Dorsolateral prefrontal cortex (tissue), 120 donors: ENCODE measurements at regions of chr15 and their contacts with region 1.

Region 1: GRCh38 chr15:92521624-92522008 is 127.9 kb downstream of the ST8SIA2 start:
- DNase-seq: peak; percentile 31 to 89 (median 76)
- H3K4me3 ChIP-seq: no peak overlapping the region
- H3K27ac ChIP-seq: no peak overlapping the region
- H3K27me3 ChIP-seq: no peaks in the 10 kb centered on the region
- CTCF ChIP-seq: peak; percentile 48 to 92 (median 82)

Region 2: GRCh38 chr15:92611993-92612745 is 90.6 kb after region 1 on chr15:
- intact Hi-C with region 1: loop called in 1 of 2 experiments (anchors 5 kb)
- DNase-seq: peak in 6 of 10 donors; percentile 36 to 76 (median 52)
- H3K4me3 ChIP-seq: no peak overlapping the region
- H3K27ac ChIP-seq: peak overlapping the region in 33 of 59 donors; percentile 2 to 64 (median 19)
- H3K27me3 ChIP-seq: no peaks in the 10 kb centered on the region
- CTCF ChIP-seq: peak in 43 of 56 donors; percentile 7 to 71 (median 36)

Region 3: GRCh38 chr15:94494732-94495131 is 1973.1 kb after region 1 on chr15:
- intact Hi-C with region 1: no loop called
- DNase-seq: no peak
- H3K4me3 ChIP-seq: no peak overlapping the region
- H3K27ac ChIP-seq: no peak overlapping the region
- H3K27me3 ChIP-seq: no peaks in the 10 kb centered on the region
- CTCF ChIP-seq: no peak